Activated CD4-positive, alpha-beta memory T cell treated with anti-CD3 and anti-CD28 coated beads for 36 hours (primary cell): ENCODE measurements at regions of chr5 and their contacts with region 1.

Region 1: GRCh38 chr5:95870105-95870672 is 47.7 kb upstream of the GLRX start:
- DNase-seq: peak; percentile 71
- H3K4me3 Mint-ChIP-seq: peak overlapping the region; percentile 54
- H3K27ac Mint-ChIP-seq: peak overlapping the region; percentile 98
- H3K4me1 Mint-ChIP-seq: peaks cover 58% of the 10 kb centered on the region
- H3K27me3 Mint-ChIP-seq: no peaks in the 10 kb centered on the region

Region 2: GRCh38 chr5:95760273-95761191 is 109.7 kb before region 1 on chr5:
- CTCF ChIA-PET with region 1: no interaction called
- POLR2A ChIA-PET with region 1: no interaction called
- intact Hi-C with region 1: loop called (anchors 1 kb)
- DNase-seq: no peak
- H3K4me3 Mint-ChIP-seq: peak overlapping the region; percentile 57
- H3K27ac Mint-ChIP-seq: peak overlapping the region; percentile 64
- H3K4me1 Mint-ChIP-seq: peaks cover 23% of the 10 kb centered on the region
- H3K27me3 Mint-ChIP-seq: peaks cover 4% of the 10 kb centered on the region

Region 3: DNA sequence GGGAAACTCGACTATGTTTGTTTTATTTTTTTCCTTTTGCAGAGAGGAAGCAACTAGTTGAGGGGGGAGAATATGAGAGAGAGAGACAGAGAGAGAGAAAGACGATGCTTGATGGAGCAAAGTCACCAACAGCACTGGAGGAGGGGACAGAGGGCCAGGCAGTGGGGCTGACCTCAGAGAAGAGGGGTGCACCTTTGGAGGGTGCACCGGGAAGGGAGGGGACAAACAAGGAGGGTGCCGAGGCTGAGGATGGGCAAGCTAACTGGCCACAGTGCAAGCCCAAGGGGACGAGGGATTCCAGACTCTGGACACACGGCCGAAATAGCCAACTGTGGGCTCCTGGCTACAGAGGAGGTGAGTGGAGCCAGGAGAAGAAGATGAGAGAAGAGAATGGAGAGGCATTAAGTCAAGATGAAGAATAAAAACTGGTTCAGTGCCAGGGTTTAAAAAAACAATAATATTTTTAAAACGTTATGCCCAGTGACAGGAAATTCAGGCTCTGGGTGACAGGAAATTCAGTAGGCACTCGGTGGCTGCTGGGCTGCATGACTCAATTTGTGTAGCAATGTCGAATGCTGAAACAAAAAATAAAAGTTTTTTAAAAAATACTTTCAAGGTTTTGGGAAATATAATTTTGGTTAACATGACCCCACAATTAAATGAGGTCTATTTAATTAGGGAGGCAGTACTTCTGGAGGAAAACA is 34.4 kb before region 1 on chr5:
- CTCF ChIA-PET with region 1: interaction called, 3 read pairs
- POLR2A ChIA-PET with region 1: no interaction called
- intact Hi-C with region 1: loop called (anchors 1 kb)
- DNase-seq: no peak
- H3K4me3 Mint-ChIP-seq: peak overlapping the region; percentile 75
- H3K27ac Mint-ChIP-seq: peak overlapping the region; percentile 91
- H3K4me1 Mint-ChIP-seq: peaks cover 50% of the 10 kb centered on the region
- H3K27me3 Mint-ChIP-seq: no peaks in the 10 kb centered on the region

Region 4: DNA sequence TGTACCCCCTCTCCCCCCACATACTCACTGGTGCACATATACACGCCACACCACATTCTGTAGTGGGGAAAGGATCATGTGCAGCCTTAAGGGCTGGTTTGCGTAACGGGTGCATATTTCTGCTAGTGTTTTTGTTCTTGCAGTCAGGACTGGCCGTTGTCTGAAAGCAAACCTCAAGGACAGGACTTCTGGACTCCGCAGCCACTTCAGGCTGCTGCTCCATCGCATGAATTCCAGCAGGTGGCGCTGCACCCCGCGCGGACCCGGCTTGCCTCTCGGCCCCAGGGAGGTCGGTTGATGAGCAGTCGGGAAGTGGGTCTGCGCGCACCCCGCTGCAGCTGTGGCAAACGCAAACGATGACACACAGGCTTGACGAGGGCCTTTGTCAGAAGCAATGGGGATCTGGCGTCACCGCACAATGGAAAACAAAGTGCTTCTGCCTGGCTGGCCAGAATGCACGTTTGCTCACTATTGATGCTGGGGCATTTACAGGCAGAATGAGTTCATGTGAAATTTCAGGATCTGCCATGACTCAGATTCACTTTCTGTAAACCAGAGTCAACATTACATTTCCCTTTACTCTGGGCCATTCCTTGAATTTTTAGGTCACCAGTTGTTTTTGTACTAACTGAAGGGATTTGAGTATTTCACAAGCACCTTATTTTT is 11.4 kb before region 1 on chr5:
- CTCF ChIA-PET with region 1: interaction called, 18 read pairs
- POLR2A ChIA-PET with region 1: interaction called, 29 read pairs
- intact Hi-C with region 1: loop called (anchors 1 kb)
- DNase-seq: peak; percentile 97
- H3K4me3 Mint-ChIP-seq: peak overlapping the region; percentile 40
- H3K27ac Mint-ChIP-seq: peak overlapping the region; percentile 68
- H3K4me1 Mint-ChIP-seq: peaks cover 55% of the 10 kb centered on the region
- H3K27me3 Mint-ChIP-seq: no peaks in the 10 kb centered on the region

Region 5: GRCh38 chr5:96065577-96066385 is 195.6 kb after region 1 on chr5:
- CTCF ChIA-PET with region 1: no interaction called
- POLR2A ChIA-PET with region 1: interaction called, 5 read pairs
- intact Hi-C with region 1: loop called (anchors 2 kb)
- DNase-seq: peak; percentile 38
- H3K4me3 Mint-ChIP-seq: no peak overlapping the region
- H3K27ac Mint-ChIP-seq: peak overlapping the region; percentile 83
- H3K4me1 Mint-ChIP-seq: peaks cover 48% of the 10 kb centered on the region
- H3K27me3 Mint-ChIP-seq: no peaks in the 10 kb centered on the region

Region 6: GRCh38 chr5:96220610-96221390 is 350.6 kb after region 1 on chr5:
- CTCF ChIA-PET with region 1: no interaction called
- POLR2A ChIA-PET with region 1: interaction called, 3 read pairs
- intact Hi-C with region 1: loop called (anchors 1 kb)
- DNase-seq: peak; percentile 37
- H3K4me3 Mint-ChIP-seq: no peak overlapping the region
- H3K27ac Mint-ChIP-seq: peak overlapping the region; percentile 78
- H3K4me1 Mint-ChIP-seq: peaks cover 22% of the 10 kb centered on the region
- H3K27me3 Mint-ChIP-seq: peaks cover 3% of the 10 kb centered on the region

Region 7: DNA sequence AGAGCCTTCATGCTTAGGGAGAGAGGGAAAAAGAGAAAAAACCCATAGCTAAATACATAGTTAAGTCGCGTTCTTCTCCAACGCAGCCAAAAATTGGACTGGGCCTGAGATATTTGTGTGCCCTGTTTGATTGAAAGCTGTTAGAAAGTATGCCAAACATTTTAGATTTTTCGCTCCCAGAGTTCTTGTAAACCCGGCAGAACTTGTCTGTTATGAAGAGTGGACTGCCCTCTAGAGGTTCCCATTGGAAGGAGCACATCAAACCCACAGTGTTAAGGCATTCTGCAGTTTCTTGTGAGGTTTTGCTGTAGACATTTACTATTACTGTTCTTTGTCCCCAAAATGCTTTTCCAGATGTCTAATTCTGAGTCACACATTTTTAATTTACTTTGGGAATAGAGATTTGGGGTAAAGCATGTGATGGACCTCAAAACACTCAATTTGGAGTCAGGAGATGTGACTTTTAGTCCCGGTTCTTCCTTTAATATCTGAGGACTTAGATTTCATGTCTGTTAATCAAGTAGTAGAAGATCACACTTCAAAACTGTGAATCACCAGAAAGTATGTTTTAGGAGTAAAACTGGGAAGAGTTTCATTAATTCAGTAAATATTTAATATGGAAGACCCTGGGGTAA is 466.3 kb after region 1 on chr5:
- CTCF ChIA-PET with region 1: interaction called, 16 read pairs
- POLR2A ChIA-PET with region 1: no interaction called
- intact Hi-C with region 1: no loop called
- DNase-seq: peak; percentile 67
- H3K4me3 Mint-ChIP-seq: no peak overlapping the region
- H3K27ac Mint-ChIP-seq: no peak overlapping the region
- H3K4me1 Mint-ChIP-seq: peaks cover 11% of the 10 kb centered on the region
- H3K27me3 Mint-ChIP-seq: peaks cover 19% of the 10 kb centered on the region